ENCODE measurements at regions of chr20 and their contacts with region 1.

Region 1: DNA sequence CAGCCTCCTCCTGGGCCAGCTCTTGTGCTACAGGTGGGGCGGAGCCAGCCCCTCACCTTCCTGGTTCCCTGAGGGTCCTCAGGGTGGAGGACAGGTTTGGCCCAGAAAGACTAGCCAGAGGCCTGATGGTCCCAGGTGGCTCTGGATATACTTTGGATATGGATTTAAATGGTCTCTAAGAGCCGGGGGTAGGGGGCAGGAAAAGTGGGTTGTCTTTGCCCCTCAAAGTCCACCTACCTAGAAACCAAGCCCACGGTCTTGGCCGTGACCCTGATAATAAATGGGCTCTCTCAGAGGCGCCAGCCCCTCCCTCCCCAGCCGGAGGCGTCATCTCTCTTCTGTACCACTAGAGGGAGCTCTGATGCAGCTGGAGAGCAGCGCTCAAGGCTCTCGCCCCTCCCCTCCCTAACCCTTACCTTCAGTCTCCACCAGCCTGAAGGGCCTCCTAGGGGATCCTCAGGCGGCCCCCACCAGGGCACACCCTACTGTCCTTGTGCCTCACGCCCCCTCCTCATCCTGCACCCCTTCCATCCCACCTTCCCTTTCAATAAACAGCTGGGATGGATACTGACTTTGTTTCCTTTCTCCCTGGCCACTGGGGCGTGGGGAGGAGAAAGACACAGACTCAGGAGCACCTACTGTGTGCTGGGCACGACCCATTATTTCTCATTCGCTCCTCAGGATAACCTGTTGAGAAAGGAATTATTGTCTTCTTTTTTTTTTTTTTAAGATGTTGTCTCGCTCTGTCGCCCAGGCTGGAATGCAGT is 7.6 kb downstream of the NRSN2 start:
- DNase-seq: peak; percentile 85
- ATAC-seq: peak; percentile 99
- H3K4me3 Mint-ChIP-seq: no peak overlapping the region
- H3K27ac Mint-ChIP-seq: no peak overlapping the region
- H3K4me1 Mint-ChIP-seq: peaks cover 10% of the 10 kb centered on the region
- H3K27me3 Mint-ChIP-seq: peaks cover 9% of the 10 kb centered on the region

Region 2: GRCh38 chr20:371755-372542 is 17.5 kb after region 1 on chr20:
- CTCF ChIA-PET with region 1: interaction called, 24 read pairs
- DNase-seq: no peak
- ATAC-seq: no peak
- H3K4me3 Mint-ChIP-seq: no peak overlapping the region
- H3K27ac Mint-ChIP-seq: peak overlapping the region; percentile 25
- H3K4me1 Mint-ChIP-seq: peaks cover 27% of the 10 kb centered on the region
- H3K27me3 Mint-ChIP-seq: no peaks in the 10 kb centered on the region

Region 3: GRCh38 chr20:438571-439469 is 84.3 kb after region 1 on chr20:
- CTCF ChIA-PET with region 1: interaction called, 11 read pairs
- DNase-seq: peak; percentile 81
- ATAC-seq: peak; percentile 76
- H3K4me3 Mint-ChIP-seq: peak overlapping the region; percentile 56
- H3K27ac Mint-ChIP-seq: peak overlapping the region; percentile 80
- H3K4me1 Mint-ChIP-seq: peaks cover 59% of the 10 kb centered on the region
- H3K27me3 Mint-ChIP-seq: no peaks in the 10 kb centered on the region

Region 4: DNA sequence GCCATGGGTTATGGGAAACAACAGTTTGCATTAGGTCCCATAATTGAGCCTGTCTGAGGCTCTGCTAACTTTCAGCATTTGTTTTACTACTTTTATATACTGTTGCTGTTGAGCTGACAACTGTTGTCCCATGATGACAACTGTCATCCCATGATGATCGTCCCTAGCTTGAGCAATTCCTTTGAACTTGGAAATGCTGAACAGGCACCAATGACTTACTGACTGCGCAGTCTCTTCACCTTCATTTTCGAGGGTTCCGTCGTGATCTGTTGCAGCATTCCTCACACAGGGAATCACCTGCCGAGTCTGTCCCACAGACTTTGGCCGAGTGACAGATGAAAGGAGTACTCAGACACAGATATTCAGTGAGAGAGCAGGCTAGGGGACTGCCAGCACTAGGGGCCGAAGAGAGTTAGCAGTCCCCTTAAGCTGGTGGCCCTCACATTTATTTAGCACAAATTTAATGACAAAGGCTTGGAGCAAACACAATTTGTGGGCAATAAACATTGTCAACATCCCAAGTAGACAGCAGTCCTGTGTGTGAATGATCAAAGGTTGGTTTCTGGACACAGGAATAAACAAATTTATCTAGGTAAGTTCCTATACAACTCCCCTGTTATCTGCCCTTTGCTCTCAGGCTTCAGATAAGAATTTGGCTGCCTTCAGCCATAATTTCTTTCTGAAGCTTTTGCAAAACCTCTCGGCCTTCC is 117.8 kb after region 1 on chr20:
- CTCF ChIA-PET with region 1: interaction called, 64 read pairs
- DNase-seq: no peak
- ATAC-seq: no peak
- H3K4me3 Mint-ChIP-seq: no peak overlapping the region
- H3K27ac Mint-ChIP-seq: no peak overlapping the region
- H3K4me1 Mint-ChIP-seq: no peaks in the 10 kb centered on the region
- H3K27me3 Mint-ChIP-seq: peaks cover 2% of the 10 kb centered on the region

Region 5: DNA sequence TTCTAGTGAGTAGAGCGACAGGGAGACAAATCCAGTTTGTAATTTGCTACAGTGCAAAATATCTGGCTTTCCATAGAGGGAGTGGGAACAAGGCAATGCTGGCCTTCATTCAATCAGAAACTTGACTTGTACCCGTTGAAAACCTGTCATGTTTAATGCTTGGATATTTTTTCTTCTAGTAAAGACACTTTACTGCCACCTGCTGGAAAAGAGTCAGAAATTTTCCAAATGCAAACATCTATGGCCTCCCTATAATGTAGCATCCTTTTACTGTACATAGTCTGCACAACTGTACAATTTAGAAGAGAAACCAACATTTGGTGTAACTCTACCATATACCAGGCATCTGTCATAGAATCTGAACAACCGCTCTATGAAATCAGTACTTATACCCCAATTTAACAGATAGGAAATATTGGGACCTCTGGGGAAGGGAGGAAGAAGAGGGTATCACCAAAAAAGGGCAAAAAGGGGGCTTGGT is 124.5 kb after region 1 on chr20:
- CTCF ChIA-PET with region 1: interaction called, 64 read pairs
- DNase-seq: no peak
- ATAC-seq: peak; percentile 81
- H3K4me3 Mint-ChIP-seq: no peak overlapping the region
- H3K27ac Mint-ChIP-seq: peak overlapping the region; percentile 10
- H3K4me1 Mint-ChIP-seq: peaks cover 9% of the 10 kb centered on the region
- H3K27me3 Mint-ChIP-seq: no peaks in the 10 kb centered on the region